CD8-positive, alpha-beta T cell (primary cell): ENCODE measurements at regions of chr16 and their contacts with region 1.

Region 1: DNA sequence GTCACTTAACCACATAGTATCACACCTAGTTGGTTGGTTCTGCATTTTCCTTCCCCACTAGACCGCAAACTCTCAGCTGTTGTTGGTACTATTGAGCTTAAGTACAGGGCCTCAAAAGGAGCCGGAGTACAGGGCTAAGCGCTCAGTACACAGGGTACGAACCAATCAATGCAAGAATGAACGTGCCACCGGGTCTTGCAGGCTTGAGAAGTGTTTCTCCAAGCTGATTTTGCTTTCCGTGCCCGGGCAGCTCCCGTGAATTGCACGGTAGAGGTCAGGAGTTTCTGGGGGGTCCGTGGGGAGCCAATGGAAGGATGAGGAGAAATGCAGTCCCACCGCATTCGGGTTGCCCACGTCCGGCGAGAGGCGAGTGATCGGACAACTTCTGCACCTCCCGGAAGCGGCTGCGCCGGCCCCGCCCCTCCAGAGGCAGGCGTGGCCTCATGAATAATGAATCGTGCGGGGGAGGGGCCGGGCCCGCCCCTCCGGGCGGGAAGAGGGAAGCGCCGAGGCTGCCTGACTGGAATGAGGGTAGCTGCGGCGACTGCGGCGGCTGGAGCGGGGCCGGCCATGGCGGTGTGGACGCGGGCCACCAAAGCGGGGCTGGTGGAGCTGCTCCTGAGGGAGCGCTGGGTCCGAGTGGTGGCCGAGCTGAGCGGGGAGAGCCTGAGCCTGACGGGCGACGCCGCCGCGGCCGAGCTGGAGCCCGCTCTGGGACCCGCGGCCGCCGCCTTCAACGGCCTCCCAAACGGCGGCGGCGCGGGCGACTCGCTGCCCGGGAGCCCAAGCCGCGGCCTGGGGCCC is at the start of gene SNTB2:
- DNase-seq: peak; percentile 48 to 91 (median 80)
- ATAC-seq: peak; percentile 77
- H3K4me3 ChIP-seq: peak within 1 kb of the TSS; percentile 75 to 82
- H3K4me3 Mint-ChIP-seq: peak within 1 kb of the TSS; percentile 99
- H3K27ac ChIP-seq: peak within 1 kb of the TSS; percentile 58 to 69
- H3K27ac Mint-ChIP-seq: peak within 1 kb of the TSS; percentile 97
- H3K4me1 ChIP-seq: peaks cover 32% of the 10 kb centered on the region
- H3K4me1 Mint-ChIP-seq: peaks cover 45% of the 10 kb centered on the region
- H3K27me3 ChIP-seq: no peaks in the 10 kb centered on the region
- H3K27me3 Mint-ChIP-seq: no peaks in the 10 kb centered on the region
- CTCF ChIP-seq: no peak
- total RNA-seq, gene SNTB2: 8.1 to 9.1 TPM

Region 2: DNA sequence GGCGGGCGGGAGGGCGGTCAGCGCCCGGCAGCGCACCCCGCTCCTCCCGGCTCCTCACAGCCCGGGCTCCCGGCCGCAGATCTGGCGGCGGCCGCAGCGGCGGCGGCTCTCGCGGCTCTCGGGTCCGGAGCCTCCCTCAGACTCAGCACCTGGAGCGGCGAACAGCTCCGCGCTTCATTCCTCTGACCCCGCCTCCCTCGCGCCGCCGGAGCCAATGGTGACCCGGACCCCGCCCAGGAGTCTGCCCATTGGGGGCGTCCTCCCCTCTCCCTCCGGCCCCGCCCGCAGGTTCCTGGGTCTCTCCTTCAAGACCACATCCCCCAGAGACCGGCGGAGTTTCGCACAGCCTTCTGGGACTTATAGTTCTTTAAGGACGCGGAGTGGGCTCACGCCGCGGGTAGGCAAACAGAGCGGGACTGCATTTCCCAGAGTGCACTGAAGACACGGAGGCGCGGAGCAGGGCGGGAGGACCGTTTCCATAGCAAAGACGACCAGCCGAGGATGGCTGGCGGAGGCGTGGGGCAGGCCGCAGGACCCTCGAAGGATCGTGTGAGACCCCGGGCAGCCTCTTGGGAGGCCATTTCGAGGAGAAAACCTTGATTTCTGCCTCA is 738.4 kb before region 1 on chr16 and contains the start of gene SMPD3:
- CTCF ChIA-PET with region 1: no interaction called
- POLR2A ChIA-PET with region 1: no interaction called
- intact Hi-C with region 1: loop called in 1 of 2 experiments (anchors 2 kb)
- DNase-seq: peak; percentile 96 to 99 (median 98)
- ATAC-seq: peak; percentile 98
- H3K4me3 ChIP-seq: peak within 1 kb of the TSS; percentile 46 to 49
- H3K4me3 Mint-ChIP-seq: peak within 1 kb of the TSS; percentile 68
- H3K27ac ChIP-seq: peak within 1 kb of the TSS in 1 of 2 experiments; percentile 37
- H3K27ac Mint-ChIP-seq: no peak within 1 kb of the TSS
- H3K4me1 ChIP-seq: peaks cover 26% of the 10 kb centered on the region
- H3K4me1 Mint-ChIP-seq: peaks cover 21% of the 10 kb centered on the region
- H3K27me3 ChIP-seq: peaks cover 18 to 25% of the 10 kb centered on the region in 2 experiments
- H3K27me3 Mint-ChIP-seq: peaks cover 24% of the 10 kb centered on the region
- CTCF ChIP-seq: no peak
- total RNA-seq, gene SMPD3: 0.24 to 0.25 TPM

Region 3: GRCh38 chr16:69132424-69133252 is 54.2 kb before region 1 on chr16 and contains the starts of genes CHTF8 and UTP4:
- CTCF ChIA-PET with region 1: interaction called, 5 read pairs
- POLR2A ChIA-PET with region 1: interaction called, 6 read pairs
- intact Hi-C with region 1: loop called (anchors 2 kb)
- DNase-seq: peak; percentile 69 to 91 (median 87)
- ATAC-seq: peak; percentile 85
- H3K4me3 ChIP-seq: peak within 1 kb of the TSS; percentile 92 to 98
- H3K4me3 Mint-ChIP-seq: peak within 1 kb of the TSS; percentile 94
- H3K27ac ChIP-seq: peak within 1 kb of the TSS; percentile 77 to 90
- H3K27ac Mint-ChIP-seq: peak within 1 kb of the TSS; percentile 95
- H3K4me1 ChIP-seq: peaks cover 26% of the 10 kb centered on the region
- H3K4me1 Mint-ChIP-seq: peaks cover 65% of the 10 kb centered on the region
- H3K27me3 ChIP-seq: no peaks in the 10 kb centered on the region
- H3K27me3 Mint-ChIP-seq: no peaks in the 10 kb centered on the region
- CTCF ChIP-seq: no peak
- total RNA-seq, gene CHTF8: 26.2 to 28.8 TPM
- total RNA-seq, gene UTP4: 45.8 to 48.7 TPM

Region 4: DNA sequence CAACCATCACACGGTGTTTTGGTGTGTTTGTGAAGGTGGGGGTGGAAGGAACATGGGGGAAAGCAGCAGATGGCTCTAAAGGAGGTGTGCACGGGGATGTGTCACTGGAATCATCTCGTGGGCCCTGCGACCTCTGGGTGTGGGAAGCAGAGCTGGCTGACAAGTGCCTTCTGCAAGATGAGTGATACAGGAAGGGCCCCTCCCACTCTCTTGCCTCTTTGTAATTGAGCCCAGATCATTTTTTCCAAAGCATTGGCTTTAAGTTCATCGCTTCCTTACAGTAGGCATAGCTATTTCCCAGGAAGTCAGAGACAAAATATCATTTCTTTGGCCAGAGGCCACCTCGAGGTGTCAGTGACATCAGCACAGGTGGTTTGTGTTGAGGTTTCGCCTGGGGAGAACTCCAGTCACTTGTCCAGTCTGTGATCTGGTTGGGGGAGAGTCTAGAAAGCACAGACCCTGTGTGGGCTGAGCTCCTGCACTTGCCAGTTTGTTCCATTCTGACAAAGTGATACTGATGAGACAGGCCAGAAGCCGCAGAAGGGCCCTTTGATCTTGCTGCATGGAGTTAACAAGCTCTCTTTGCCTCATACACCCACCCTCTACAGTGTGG is 20.5 kb before region 1 on chr16:
- CTCF ChIA-PET with region 1: interaction called, 3 read pairs
- POLR2A ChIA-PET with region 1: interaction called, 6 read pairs
- intact Hi-C with region 1: loop called in 1 of 2 experiments (anchors 1 kb)
- DNase-seq: peak in 5 of 9 experiments; percentile 21 to 60 (median 37)
- ATAC-seq: peak; percentile 86
- H3K4me3 ChIP-seq: no peak overlapping the region
- H3K4me3 Mint-ChIP-seq: peak overlapping the region; percentile 38
- H3K27ac ChIP-seq: peak overlapping the region in 1 of 2 experiments; percentile 30
- H3K27ac Mint-ChIP-seq: peak overlapping the region; percentile 75
- H3K4me1 ChIP-seq: peaks cover 13% of the 10 kb centered on the region
- H3K4me1 Mint-ChIP-seq: peaks cover 22% of the 10 kb centered on the region
- H3K27me3 ChIP-seq: no peaks in the 10 kb centered on the region
- H3K27me3 Mint-ChIP-seq: no peaks in the 10 kb centered on the region
- CTCF ChIP-seq: no peak

Region 5: GRCh38 chr16:69330286-69331109 is 143.7 kb after region 1 on chr16 and contains the start of gene PDF:
- CTCF ChIA-PET with region 1: no interaction called
- POLR2A ChIA-PET with region 1: interaction called, 4 read pairs
- intact Hi-C with region 1: loop called in 1 of 2 experiments (anchors 5 kb)
- DNase-seq: peak in 8 of 9 experiments; percentile 79 to 91 (median 82)
- ATAC-seq: peak; percentile 91
- H3K4me3 ChIP-seq: peak within 1 kb of the TSS; percentile 53 to 83
- H3K4me3 Mint-ChIP-seq: peak within 1 kb of the TSS; percentile 79
- H3K27ac ChIP-seq: peak within 1 kb of the TSS; percentile 60 to 75
- H3K27ac Mint-ChIP-seq: peak within 1 kb of the TSS; percentile 74
- H3K4me1 ChIP-seq: peaks cover 43% of the 10 kb centered on the region
- H3K4me1 Mint-ChIP-seq: peaks cover 52% of the 10 kb centered on the region
- H3K27me3 ChIP-seq: no peaks in the 10 kb centered on the region
- H3K27me3 Mint-ChIP-seq: no peaks in the 10 kb centered on the region
- CTCF ChIP-seq: no peak
- total RNA-seq, gene PDF: 3.3 to 3.6 TPM